ENCODE measurements at regions of chr6 and their contacts with region 1.

Region 1: GRCh38 chr6:72622094-72622940 is 453 bp downstream of the KCNQ5 start:
- DNase-seq: peak; percentile 73
- ATAC-seq: peak; percentile 13
- H3K4me3 Mint-ChIP-seq: peak overlapping the region; percentile 96
- H3K27ac Mint-ChIP-seq: peak overlapping the region; percentile 98
- H3K4me1 Mint-ChIP-seq: peaks cover 60% of the 10 kb centered on the region
- H3K27me3 Mint-ChIP-seq: no peaks in the 10 kb centered on the region
- CTCF ChIP-seq: peak; percentile 35

Region 2: GRCh38 chr6:72649032-72649984 is 27.0 kb after region 1 on chr6:
- CTCF ChIA-PET with region 1: interaction called, 14 read pairs
- POLR2A ChIA-PET with region 1: interaction called, 24 read pairs
- intact Hi-C with region 1: loop called (anchors 2 kb)
- DNase-seq: peak; percentile 53
- ATAC-seq: peak; percentile 83
- H3K4me3 Mint-ChIP-seq: no peak overlapping the region
- H3K27ac Mint-ChIP-seq: peak overlapping the region; percentile 76
- H3K4me1 Mint-ChIP-seq: peaks cover 37% of the 10 kb centered on the region
- H3K27me3 Mint-ChIP-seq: no peaks in the 10 kb centered on the region
- CTCF ChIP-seq: no peak

Region 3: GRCh38 chr6:72740135-72740534 is 117.8 kb after region 1 on chr6:
- CTCF ChIA-PET with region 1: interaction called, 4 read pairs
- POLR2A ChIA-PET with region 1: interaction called, 3 read pairs
- intact Hi-C with region 1: loop called (anchors 5 kb)
- DNase-seq: peak; percentile 33
- ATAC-seq: peak; percentile 43
- H3K4me3 Mint-ChIP-seq: no peak overlapping the region
- H3K27ac Mint-ChIP-seq: peak overlapping the region; percentile 58
- H3K4me1 Mint-ChIP-seq: peaks cover 38% of the 10 kb centered on the region
- H3K27me3 Mint-ChIP-seq: no peaks in the 10 kb centered on the region
- CTCF ChIP-seq: no peak

Region 4: GRCh38 chr6:72825315-72825911 is 203.1 kb after region 1 on chr6:
- CTCF ChIA-PET with region 1: no interaction called
- POLR2A ChIA-PET with region 1: no interaction called
- intact Hi-C with region 1: loop called (anchors 10 kb)
- DNase-seq: no peak
- ATAC-seq: peak; percentile 24
- H3K4me3 Mint-ChIP-seq: no peak overlapping the region
- H3K27ac Mint-ChIP-seq: no peak overlapping the region
- H3K4me1 Mint-ChIP-seq: peaks cover 29% of the 10 kb centered on the region
- H3K27me3 Mint-ChIP-seq: no peaks in the 10 kb centered on the region
- CTCF ChIP-seq: no peak

Region 5: DNA sequence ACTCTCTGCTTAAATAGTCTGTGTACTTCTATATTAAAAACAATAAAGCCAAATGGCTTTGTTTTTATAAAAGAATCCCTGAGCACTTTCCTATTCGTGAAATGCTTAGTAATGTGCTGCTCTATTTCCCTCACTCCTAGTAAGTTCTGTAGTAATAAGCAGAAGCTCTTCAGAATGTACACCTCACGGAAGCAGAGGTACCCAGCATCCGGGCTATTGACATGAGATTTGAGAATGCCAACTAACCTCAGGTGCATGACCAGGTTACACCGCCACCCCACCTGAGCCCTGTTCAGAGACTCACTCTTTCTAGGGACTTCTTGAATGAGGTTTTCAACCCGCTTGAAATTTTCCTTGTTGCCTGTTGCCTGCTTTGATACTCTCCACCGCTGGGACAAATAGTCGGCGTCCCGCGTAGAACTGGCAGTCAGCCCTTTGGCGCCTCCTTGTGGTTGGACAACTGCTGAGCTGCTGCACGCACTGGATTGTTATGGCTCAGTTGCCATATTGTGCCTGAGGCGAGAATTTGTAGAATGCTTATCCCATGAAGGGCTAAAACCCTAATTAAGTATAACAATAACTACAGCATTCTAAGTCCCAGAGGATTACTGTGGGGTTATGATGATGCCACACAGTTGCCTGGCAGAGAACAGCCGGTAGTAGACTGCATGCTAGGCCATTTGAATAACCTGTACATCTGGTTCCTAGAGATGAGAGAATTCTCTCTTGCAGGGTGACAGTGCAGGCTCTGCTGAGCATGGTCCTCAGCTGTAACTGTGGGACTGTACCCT is 507.5 kb after region 1 on chr6:
- CTCF ChIA-PET with region 1: interaction called, 151 read pairs
- POLR2A ChIA-PET with region 1: interaction called, 5 read pairs
- intact Hi-C with region 1: no loop called
- DNase-seq: peak; percentile 91
- ATAC-seq: peak; percentile 96
- H3K4me3 Mint-ChIP-seq: no peak overlapping the region
- H3K27ac Mint-ChIP-seq: no peak overlapping the region
- H3K4me1 Mint-ChIP-seq: peaks cover 1% of the 10 kb centered on the region
- H3K27me3 Mint-ChIP-seq: no peaks in the 10 kb centered on the region
- CTCF ChIP-seq: peak; percentile 98

Measured in activated CD8-positive, alpha-beta T cell treated with anti-CD3 and anti-CD28 coated beads for 36 hours (primary cell).